AG04450 (cell line): ENCODE measurements at regions of chr15 and their contacts with region 1.

Region 1: DNA sequence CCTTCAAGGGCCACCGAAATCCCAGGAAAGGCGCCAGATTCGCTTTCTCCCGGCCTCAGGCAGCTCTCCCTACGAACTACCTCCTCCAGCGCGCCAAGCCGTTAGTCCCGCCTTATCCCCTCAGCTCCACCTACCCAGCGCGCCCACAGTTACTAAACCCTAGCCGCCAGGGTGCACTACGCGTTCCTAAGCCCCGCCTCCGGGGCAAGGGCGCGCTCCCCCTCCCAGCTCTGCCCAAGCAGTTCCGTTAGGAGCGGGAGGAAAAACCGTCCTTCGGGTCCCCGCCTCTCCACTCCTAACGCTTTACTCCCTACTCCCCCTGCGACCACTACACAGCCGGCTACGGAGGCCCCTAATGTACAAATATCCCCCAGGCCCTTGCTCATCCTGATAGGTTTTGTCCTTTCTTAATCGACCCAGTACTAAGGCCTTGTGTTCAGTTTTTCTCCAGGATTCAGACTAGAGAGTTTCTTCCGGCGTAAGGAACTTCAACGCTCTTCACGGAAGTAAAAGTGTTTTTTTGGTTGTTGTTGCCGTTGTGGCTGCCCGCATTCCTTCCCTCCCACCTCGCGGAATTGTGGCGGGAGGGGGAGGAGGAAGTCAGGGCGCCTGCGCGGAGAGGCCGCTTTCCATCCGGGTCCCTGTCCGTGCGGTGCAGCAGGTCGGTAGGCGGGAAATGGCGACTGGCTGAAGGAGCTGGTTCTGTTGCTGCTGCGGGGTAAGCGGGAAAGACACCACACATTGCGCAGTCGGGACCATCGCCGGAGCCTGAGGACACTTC is at the start of gene CTDSPL2:
- DNase-seq: peak; percentile 98
- H3K4me3 ChIP-seq: peak within 1 kb of the TSS; percentile 96
- H3K27ac ChIP-seq: peak within 1 kb of the TSS; percentile 100
- H3K27me3 ChIP-seq: no peaks in the 10 kb centered on the region
- CTCF ChIP-seq: 0 out of 2 replicates have a peak, but pooled peaks have one; percentile 43
- polyA plus RNA-seq, gene CTDSPL2: 43.8 and 59.6 TPM in 2 replicates

Region 2: DNA sequence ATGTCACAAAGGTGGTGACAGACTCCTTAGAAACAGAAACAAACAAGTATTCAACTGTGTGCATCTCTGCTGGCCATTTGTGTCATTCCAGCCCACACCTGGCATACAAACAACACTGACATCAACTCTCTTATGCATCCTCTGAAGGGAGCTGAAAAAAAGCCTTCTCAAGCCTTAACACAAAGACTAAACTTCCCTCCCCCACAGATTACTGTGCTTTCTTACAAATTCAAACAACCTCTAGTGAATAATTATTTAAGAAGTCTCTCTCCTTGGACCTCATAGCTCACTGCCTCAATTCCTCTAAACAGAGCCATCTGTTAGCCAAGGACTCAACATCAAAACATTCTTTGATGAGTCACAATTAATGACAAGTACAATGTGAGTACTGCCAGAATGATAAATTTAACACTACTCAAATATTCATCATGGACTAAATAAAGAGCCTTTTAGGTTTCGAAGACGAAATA is 468.3 kb before region 1 on chr15:
- CTCF ChIA-PET with region 1: no interaction called
- POLR2A ChIA-PET with region 1: no interaction called
- DNase-seq: peak; percentile 79
- H3K4me3 ChIP-seq: no peak overlapping the region
- H3K27ac ChIP-seq: peak overlapping the region; percentile 66
- H3K27me3 ChIP-seq: no peaks in the 10 kb centered on the region
- CTCF ChIP-seq: no peak

Region 3: GRCh38 chr15:44181410-44181809 is 245.8 kb before region 1 on chr15:
- CTCF ChIA-PET with region 1: no interaction called
- POLR2A ChIA-PET with region 1: no interaction called
- DNase-seq: no peak
- H3K4me3 ChIP-seq: no peak overlapping the region
- H3K27ac ChIP-seq: no peak overlapping the region
- H3K27me3 ChIP-seq: no peaks in the 10 kb centered on the region
- CTCF ChIP-seq: no peak

Region 4: GRCh38 chr15:44286814-44287452 is 140.2 kb before region 1 on chr15:
- CTCF ChIA-PET with region 1: interaction called, 4 read pairs
- POLR2A ChIA-PET with region 1: interaction called, 18 read pairs
- DNase-seq: no peak
- H3K4me3 ChIP-seq: peak overlapping the region; percentile 87
- H3K27ac ChIP-seq: no peak overlapping the region
- H3K27me3 ChIP-seq: no peaks in the 10 kb centered on the region
- CTCF ChIP-seq: peak; percentile 29

Region 5: DNA sequence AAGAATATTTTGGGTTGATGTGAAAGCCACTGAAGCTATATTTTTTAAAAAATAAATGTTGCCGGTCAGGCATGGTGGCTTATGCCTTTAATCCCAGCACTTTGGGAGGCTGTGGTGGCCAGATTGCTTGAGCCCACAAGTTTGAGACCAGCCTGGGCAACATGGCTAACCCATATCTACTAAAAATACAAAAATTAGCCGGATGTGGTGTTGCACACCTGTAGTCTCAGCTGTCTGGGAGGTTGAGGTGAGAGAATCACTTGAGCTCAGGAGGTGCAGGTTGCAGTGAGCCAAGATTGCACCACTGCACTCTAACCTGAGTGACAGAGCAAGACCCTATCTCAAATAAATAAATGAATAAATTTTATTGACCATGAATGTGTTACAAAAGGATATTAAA is 99.0 kb before region 1 on chr15:
- CTCF ChIA-PET with region 1: no interaction called
- POLR2A ChIA-PET with region 1: no interaction called
- DNase-seq: no peak
- H3K4me3 ChIP-seq: no peak overlapping the region
- H3K27ac ChIP-seq: no peak overlapping the region
- H3K27me3 ChIP-seq: no peaks in the 10 kb centered on the region
- CTCF ChIP-seq: no peak

Region 6: GRCh38 chr15:44414001-44414400 is 13.2 kb before region 1 on chr15:
- CTCF ChIA-PET with region 1: interaction called, 11 read pairs
- POLR2A ChIA-PET with region 1: interaction called, 4 read pairs
- DNase-seq: no peak
- H3K4me3 ChIP-seq: no peak overlapping the region
- H3K27ac ChIP-seq: no peak overlapping the region
- H3K27me3 ChIP-seq: no peaks in the 10 kb centered on the region
- CTCF ChIP-seq: no peak

Region 7: DNA sequence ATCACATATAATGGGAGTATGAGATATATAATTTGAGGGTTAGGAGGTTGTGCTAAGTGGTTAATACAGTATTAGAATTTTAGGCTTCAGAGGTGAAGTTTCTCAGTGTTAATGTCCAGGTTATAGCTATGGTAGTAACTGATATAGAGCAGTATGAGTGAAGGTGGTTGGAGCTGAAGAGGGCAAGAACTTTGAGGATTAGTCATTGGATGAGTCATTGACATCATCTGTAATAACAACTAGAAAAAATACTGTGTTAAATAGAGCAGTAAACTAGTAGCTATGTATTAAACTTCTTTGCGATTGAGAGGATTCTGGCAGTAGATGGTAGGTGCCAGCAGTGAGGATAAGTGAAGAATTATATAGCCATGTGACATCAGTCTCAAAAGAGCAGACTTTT is 62.3 kb after region 1 on chr15:
- CTCF ChIA-PET with region 1: interaction called, 3 read pairs
- POLR2A ChIA-PET with region 1: interaction called, 13 read pairs
- DNase-seq: peak; percentile 49
- H3K4me3 ChIP-seq: no peak overlapping the region
- H3K27ac ChIP-seq: no peak overlapping the region
- H3K27me3 ChIP-seq: no peaks in the 10 kb centered on the region
- CTCF ChIP-seq: no peak

Region 8: GRCh38 chr15:44536962-44537734 is 110.0 kb after region 1 on chr15 and contains the start of gene EIF3J:
- CTCF ChIA-PET with region 1: no interaction called
- POLR2A ChIA-PET with region 1: interaction called, 13 read pairs
- DNase-seq: peak; percentile 90
- H3K4me3 ChIP-seq: peak within 1 kb of the TSS; percentile 84
- H3K27ac ChIP-seq: peak within 1 kb of the TSS; percentile 97
- H3K27me3 ChIP-seq: no peaks in the 10 kb centered on the region
- CTCF ChIP-seq: no peak
- polyA plus RNA-seq, gene EIF3J: 70.9 and 97.5 TPM in 2 replicates

Region 9: GRCh38 chr15:44616974-44617373 is 189.8 kb after region 1 on chr15:
- CTCF ChIA-PET with region 1: no interaction called
- POLR2A ChIA-PET with region 1: no interaction called
- DNase-seq: no peak
- H3K4me3 ChIP-seq: no peak overlapping the region
- H3K27ac ChIP-seq: no peak overlapping the region
- H3K27me3 ChIP-seq: no peaks in the 10 kb centered on the region
- CTCF ChIP-seq: no peak